Naive thymus-derived CD4-positive, alpha-beta T cell (primary cell): ENCODE measurements at regions of chr2 and their contacts with region 1.

Region 1: DNA sequence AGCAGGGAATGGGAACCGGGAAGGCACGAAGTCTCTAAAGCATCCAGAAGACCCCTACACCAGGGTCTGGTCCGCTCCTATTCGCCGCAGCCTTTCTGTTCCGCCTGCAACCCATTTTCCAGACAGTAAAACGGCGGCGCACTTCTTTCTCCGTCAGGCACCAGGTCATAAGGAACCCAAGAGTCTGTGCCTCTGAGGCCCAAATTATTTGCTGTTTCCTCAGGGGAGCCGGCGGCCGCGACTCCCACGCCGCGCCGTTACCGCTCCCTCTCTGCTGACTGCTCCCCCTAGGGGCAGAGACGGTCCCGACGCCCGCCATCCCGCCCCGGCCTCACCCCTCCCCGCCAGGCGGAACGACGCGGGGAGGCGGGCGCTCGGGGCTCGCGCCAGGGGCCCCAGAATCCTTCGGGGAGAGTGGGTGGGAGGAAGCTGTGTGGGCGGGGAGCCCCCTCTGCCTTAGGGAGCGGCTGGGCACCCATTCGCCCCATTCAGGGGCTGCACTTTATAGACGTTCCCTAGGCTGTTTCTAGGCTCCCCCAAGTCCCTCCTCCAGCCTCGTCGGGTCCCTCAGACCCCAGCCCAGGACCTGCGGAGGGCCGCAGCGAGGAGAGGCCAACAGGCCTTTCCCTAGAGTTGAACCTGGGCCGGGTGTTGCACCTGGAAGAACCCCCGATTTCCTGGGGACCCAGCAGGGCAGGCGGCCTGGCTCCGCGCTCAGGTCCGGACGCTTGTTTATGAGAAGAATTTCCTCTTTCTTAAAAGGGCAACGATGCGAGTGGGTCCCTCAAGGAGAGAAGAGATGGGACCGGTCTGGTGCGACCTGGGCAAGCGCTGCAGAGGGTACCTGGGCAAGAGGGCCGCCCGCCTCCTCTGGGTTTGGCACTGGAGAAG is 3.6 kb upstream of the CTDSP1 start:
- DNase-seq: peak; percentile 91 to 98 (median 96)
- ATAC-seq: peak; percentile 83
- H3K4me3 ChIP-seq: peak overlapping the region; percentile 71
- H3K4me3 Mint-ChIP-seq: peak overlapping the region; percentile 85 to 99 (median 94)
- H3K27ac ChIP-seq: peak overlapping the region; percentile 86
- H3K27ac Mint-ChIP-seq: peak overlapping the region; percentile 96 to 100 (median 97)
- H3K4me1 ChIP-seq: peaks cover 29 to 31% of the 10 kb centered on the region in 2 donors
- H3K4me1 Mint-ChIP-seq: peaks cover 16 to 41% (median 39%) of the 10 kb centered on the region in 7 donors
- H3K27me3 ChIP-seq: no peaks in the 10 kb centered on the region
- H3K27me3 Mint-ChIP-seq: no peaks in the 10 kb centered on the region

Region 2: DNA sequence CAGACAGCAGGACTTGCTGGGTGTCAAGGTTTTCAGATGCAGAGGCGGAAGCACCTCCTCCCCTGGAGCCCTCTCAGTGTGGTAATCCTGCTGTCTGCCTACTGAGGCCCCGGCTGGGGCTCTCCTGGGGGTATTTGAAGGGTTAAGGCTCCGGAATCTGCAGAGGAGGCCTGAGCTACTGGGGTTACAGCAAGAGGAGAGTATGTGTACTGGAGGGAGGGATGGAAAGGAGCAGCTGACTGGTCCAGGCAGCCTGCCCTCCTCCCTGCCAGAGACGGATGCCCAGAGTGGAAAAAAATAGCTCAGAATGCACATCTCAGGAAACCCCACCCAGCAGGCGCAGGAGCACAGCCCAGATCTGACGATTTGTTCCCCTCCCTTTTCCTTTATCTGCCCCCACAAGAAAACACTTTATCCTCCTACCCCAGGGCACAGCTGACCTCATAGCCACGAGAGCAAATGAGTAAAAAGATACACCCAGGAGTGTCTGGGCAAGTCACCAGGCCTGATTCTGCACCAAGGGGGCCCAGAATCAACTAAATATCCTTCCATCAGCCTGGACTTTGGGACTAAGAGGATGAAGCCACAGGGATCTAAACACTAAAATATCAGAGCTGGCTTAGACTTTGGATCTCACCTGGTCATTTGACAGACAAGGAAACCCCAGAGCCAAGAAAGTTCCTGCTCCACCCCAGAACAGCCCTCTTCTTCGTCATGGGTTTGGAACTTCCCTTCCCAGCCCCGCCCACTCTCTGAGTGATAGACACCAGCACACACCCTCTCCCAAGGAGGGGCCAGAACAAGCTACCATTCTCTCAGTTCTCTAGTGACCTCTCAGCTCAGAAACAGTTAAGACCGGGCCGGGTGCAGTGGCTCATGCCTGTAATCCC is 109.2 kb before region 1 on chr2:
- CTCF ChIA-PET with region 1: interaction called, 17 read pairs
- POLR2A ChIA-PET with region 1: interaction called, 34 read pairs
- intact Hi-C with region 1: loop called (anchors 1 kb)
- DNase-seq: peak; percentile 53 to 90 (median 78)
- ATAC-seq: peak; percentile 87
- H3K4me3 ChIP-seq: peak overlapping the region; percentile 66
- H3K4me3 Mint-ChIP-seq: peak overlapping the region; percentile 85 to 97 (median 94)
- H3K27ac ChIP-seq: peak overlapping the region; percentile 93
- H3K27ac Mint-ChIP-seq: peak overlapping the region; percentile 95 to 99 (median 99)
- H3K4me1 ChIP-seq: peaks cover 74 to 77% of the 10 kb centered on the region in 2 donors
- H3K4me1 Mint-ChIP-seq: peaks cover 53 to 87% (median 76%) of the 10 kb centered on the region in 7 donors
- H3K27me3 ChIP-seq: no peaks in the 10 kb centered on the region
- H3K27me3 Mint-ChIP-seq: no peaks in the 10 kb centered on the region

Region 3: GRCh38 chr2:218360447-218360846 is 35.6 kb before region 1 on chr2:
- CTCF ChIA-PET with region 1: interaction called, 19 read pairs
- POLR2A ChIA-PET with region 1: interaction called, 6 read pairs
- intact Hi-C with region 1: loop called (anchors 1 to 5 kb)
- DNase-seq: no peak
- ATAC-seq: peak; percentile 68
- H3K4me3 ChIP-seq: no peak overlapping the region
- H3K4me3 Mint-ChIP-seq: no peak overlapping the region
- H3K27ac ChIP-seq: no peak overlapping the region
- H3K27ac Mint-ChIP-seq: no peak overlapping the region
- H3K4me1 ChIP-seq: no peaks in the 10 kb centered on the region
- H3K4me1 Mint-ChIP-seq: peaks cover 0 to 6% (median under 1%) of the 10 kb centered on the region in 7 donors
- H3K27me3 ChIP-seq: no peaks in the 10 kb centered on the region
- H3K27me3 Mint-ChIP-seq: peaks cover 0 to 6% (median 0%) of the 10 kb centered on the region in 5 donors

Region 4: DNA sequence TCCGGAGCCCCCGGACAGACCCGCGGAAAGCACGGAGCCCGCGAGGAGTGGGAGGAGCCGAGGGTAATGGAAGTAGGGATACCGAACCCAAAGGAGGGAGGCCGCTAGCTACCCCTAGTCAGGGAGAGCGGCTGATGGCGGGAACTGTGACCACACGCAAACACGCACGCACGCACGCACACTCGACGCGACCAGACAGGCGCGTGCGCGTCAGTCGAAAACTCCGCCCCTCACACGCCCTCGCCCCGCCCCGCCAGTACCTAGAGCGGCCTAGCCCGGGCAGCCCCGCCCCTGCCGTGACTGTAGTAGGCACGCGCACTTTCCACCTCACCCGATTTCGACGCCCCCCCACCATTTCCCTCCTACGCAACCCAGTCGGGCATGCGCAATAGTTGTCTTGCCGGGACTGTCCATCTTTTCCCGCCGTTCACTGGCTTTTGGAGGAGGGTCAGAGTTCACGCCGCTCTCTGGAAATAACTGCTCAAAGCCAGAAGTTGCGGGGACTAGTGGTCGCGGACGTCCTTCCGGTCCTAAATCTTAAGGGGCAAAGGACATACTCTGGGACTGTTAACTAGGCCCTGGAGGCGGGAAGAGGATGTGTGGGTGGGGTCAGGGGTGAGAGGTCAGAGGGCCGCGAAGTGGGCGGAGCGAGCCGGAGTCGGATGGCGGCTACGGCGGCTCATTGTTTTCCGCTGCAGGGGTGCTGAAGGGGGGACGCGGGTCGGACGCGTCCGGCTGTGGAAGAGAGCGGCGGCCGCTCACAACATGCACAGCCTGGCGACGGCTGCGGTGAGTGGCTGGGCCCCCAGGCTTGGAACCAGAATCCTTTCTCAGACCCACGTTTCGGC is 172.4 kb after region 1 on chr2 and contains the starts of genes CNOT9 and USP37:
- CTCF ChIA-PET with region 1: no interaction called
- POLR2A ChIA-PET with region 1: interaction called, 4 read pairs
- intact Hi-C with region 1: loop called (anchors 1 kb)
- DNase-seq: peak; percentile 99 to 100 (median 100)
- ATAC-seq: peak; percentile 95
- H3K4me3 ChIP-seq: peak within 1 kb of the TSS; percentile 78
- H3K4me3 Mint-ChIP-seq: peak within 1 kb of the TSS; percentile 90 to 100 (median 98)
- H3K27ac ChIP-seq: peak within 1 kb of the TSS; percentile 96
- H3K27ac Mint-ChIP-seq: peak within 1 kb of the TSS; percentile 97 to 100 (median 99)
- H3K4me1 ChIP-seq: peaks cover 22 to 31% of the 10 kb centered on the region in 2 donors
- H3K4me1 Mint-ChIP-seq: peaks cover 45 to 73% (median 64%) of the 10 kb centered on the region in 7 donors
- H3K27me3 ChIP-seq: no peaks in the 10 kb centered on the region
- H3K27me3 Mint-ChIP-seq: no peaks in the 10 kb centered on the region
- total RNA-seq, gene CNOT9: 44.7 to 99.6 (median 53.8) TPM
- total RNA-seq, gene USP37: 16.6 to 36.3 (median 28.1) TPM

Region 5: DNA sequence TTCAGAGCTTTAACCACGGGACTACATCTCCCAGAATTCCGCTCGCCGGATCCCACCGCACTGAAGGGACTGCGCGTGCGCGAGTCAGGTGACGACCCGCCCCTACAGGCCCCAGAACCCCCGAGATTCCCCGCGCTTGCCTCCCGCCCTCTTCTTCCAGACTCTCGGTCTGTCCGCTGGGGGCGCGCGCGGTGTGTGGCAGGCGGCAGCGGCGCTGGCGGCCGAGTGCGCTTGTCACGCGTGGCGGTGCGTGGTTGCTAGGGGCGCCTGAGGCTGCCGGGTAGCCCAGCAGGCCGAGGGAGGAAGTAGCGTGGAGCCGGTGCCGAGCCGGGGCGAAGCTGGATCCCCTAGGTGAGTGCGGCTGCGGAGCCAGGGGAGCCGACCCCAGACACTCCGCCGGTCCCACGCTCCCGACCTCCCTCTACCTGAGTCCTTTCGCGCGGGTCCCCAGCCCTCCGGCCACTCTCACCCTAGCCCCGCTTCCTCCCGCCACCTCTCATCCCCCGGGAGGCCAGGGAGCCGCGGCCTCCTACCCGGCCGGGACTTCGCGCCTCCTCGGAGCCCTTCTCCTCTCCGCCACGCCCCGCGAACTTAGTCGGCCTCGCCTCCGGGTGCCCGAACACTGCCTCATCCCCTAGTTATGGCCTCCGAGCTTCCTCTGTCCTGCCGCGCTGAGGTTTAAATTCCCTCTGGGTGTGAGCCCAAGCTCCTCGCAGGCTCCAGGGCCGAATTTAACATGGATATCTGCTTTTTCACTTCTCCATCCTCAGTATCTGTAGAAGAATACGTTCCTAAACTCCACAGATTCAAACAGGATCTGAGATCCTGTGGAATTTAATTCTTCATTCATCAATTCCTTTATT is 314.9 kb after region 1 on chr2 and contains the start of gene TTLL4:
- CTCF ChIA-PET with region 1: no interaction called
- POLR2A ChIA-PET with region 1: no interaction called
- intact Hi-C with region 1: loop called (anchors 1 to 2 kb)
- DNase-seq: peak; percentile 98 to 99 (median 99)
- ATAC-seq: peak; percentile 99
- H3K4me3 ChIP-seq: peak within 1 kb of the TSS; percentile 79
- H3K4me3 Mint-ChIP-seq: peak within 1 kb of the TSS; percentile 91 to 99 (median 97)
- H3K27ac ChIP-seq: peak within 1 kb of the TSS; percentile 86
- H3K27ac Mint-ChIP-seq: peak within 1 kb of the TSS; percentile 58 to 96 (median 90)
- H3K4me1 ChIP-seq: peaks cover 8% of the 10 kb centered on the region in 2 donors
- H3K4me1 Mint-ChIP-seq: peaks cover 17 to 31% (median 19%) of the 10 kb centered on the region in 7 donors
- H3K27me3 ChIP-seq: no peaks in the 10 kb centered on the region
- H3K27me3 Mint-ChIP-seq: peaks cover 0 to 7% (median 0%) of the 10 kb centered on the region in 5 donors
- total RNA-seq, gene TTLL4: 18.7 to 35.8 (median 21.2) TPM

Region 6: DNA sequence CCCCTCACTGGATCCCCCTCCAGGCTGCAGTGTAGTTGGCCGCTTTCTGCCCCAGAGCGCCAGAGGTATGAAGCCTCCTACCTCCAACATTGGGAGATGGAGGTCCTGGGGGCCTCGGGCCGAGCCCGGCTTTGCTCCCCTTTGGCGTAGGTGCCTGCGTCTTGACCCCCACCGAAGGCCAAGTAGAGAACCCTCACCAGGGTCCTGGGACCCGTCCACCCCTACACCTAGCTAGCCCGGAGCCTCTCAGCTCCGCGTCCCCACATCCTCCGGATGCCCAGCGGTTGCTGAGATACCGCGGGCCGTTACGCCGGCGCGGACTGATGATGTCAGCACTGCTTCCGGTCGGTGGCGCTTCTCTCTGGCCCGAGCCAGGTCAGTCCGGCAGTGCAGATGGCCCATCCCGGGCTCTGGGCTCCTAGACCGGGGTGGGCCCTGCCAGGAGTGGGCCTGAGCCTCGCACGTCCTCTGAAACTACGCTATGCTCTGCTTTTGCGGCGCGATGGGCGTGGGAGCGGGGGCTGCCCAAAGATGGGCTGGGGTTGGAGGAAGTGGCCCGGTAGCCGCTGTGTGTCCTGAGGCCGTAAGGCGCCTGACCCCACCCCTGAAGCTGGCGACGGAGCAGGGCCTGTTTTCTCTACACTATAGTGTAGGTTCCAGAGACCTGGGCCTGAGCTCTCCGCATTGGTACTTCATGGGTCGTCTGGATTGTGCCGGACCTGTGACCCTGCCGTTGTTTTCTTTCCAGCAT is 849.3 kb after region 1 on chr2 and contains the starts of genes GLB1L and STK16:
- CTCF ChIA-PET with region 1: no interaction called
- POLR2A ChIA-PET with region 1: no interaction called
- intact Hi-C with region 1: loop called (anchors 5 kb)
- DNase-seq: peak; percentile 76 to 95 (median 85)
- ATAC-seq: peak; percentile 80
- H3K4me3 ChIP-seq: peak within 1 kb of the TSS; percentile 92
- H3K4me3 Mint-ChIP-seq: peak within 1 kb of the TSS; percentile 82 to 100 (median 93)
- H3K27ac ChIP-seq: peak within 1 kb of the TSS; percentile 89
- H3K27ac Mint-ChIP-seq: peak within 1 kb of the TSS; percentile 88 to 99 (median 97)
- H3K4me1 ChIP-seq: peaks cover 52 to 53% of the 10 kb centered on the region in 2 donors
- H3K4me1 Mint-ChIP-seq: peaks cover 26 to 73% (median 59%) of the 10 kb centered on the region in 7 donors
- H3K27me3 ChIP-seq: no peaks in the 10 kb centered on the region
- H3K27me3 Mint-ChIP-seq: peaks cover 0 to 2% (median 0%) of the 10 kb centered on the region in 5 donors
- total RNA-seq, gene GLB1L: 1.9 to 4.5 (median 2.7) TPM
- total RNA-seq, gene STK16: 17.4 to 35.0 (median 21.8) TPM

Region 7: DNA sequence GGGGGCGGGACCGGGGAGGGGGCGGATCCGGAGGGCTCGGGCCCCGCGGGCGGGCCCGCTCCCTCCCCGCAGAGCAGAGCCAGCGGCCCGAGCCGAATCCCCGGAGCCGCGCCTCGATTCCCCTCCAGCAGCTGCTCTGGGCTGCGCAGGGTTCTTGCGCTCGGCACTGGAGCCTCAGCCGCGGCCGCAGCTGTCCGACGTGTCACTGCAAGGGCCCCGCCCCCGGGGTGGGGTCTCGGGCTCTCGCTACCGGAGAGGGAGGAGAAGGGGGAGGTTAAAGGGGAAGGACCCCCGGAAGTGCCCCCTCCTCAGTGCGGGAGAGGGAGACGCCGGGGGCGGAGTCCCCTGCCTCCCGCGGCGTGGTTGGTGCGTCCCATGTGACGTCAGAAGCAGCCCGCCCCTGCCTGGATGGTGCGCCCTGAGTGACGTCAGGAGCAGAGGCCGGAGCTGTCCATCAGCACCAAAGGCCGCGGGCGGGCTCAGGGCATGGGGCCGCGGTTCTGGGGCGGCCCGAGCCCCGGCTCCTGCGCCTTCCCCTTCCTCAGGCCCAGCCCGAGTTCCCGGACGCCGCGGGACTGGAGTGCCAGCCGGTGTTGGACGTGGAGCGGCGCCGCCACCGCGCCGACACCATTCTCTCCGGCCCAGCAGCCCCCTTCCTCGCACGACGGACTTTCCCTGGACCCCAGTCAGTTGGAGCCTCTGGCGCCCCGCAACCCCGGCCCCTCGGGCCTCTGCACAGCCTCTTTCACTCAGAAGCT is 1147.7 kb after region 1 on chr2 and contains the starts of genes CHPF and TMEM198:
- CTCF ChIA-PET with region 1: no interaction called
- POLR2A ChIA-PET with region 1: no interaction called
- intact Hi-C with region 1: loop called in 1 of 2 experiments (anchors 5 kb)
- DNase-seq: peak; percentile 79 to 94 (median 88)
- ATAC-seq: peak; percentile 86
- H3K4me3 ChIP-seq: peak within 1 kb of the TSS; percentile 51
- H3K4me3 Mint-ChIP-seq: peak within 1 kb of the TSS; percentile 83 to 95 (median 90)
- H3K27ac ChIP-seq: peak within 1 kb of the TSS; percentile 78
- H3K27ac Mint-ChIP-seq: peak within 1 kb of the TSS; percentile 71 to 90 (median 78)
- H3K4me1 ChIP-seq: peaks cover 10 to 12% of the 10 kb centered on the region in 2 donors
- H3K4me1 Mint-ChIP-seq: peaks cover 18 to 30% (median 25%) of the 10 kb centered on the region in 7 donors
- H3K27me3 ChIP-seq: no peaks in the 10 kb centered on the region
- H3K27me3 Mint-ChIP-seq: peaks cover 0 to 18% (median 11%) of the 10 kb centered on the region in 5 donors
- total RNA-seq, gene CHPF: 4.3 to 15.3 (median 5.7) TPM
- total RNA-seq, gene TMEM198: 0.45 to 0.69 (median 0.50) TPM in 4 of 5 experiments, not detected in the other